ENCODE measurements at regions of chrX and their contacts with region 1.

Region 1: GRCh38 chrX:38664285-38664684 is 102.9 kb downstream of the TSPAN7 start:
- DNase-seq: peak; percentile 52
- H3K4me3 ChIP-seq: no peak overlapping the region
- H3K27ac ChIP-seq: no peak overlapping the region
- H3K4me1 ChIP-seq: no peaks in the 10 kb centered on the region
- H3K27me3 ChIP-seq: no peaks in the 10 kb centered on the region
- CTCF ChIP-seq: peak; percentile 58

Region 2: DNA sequence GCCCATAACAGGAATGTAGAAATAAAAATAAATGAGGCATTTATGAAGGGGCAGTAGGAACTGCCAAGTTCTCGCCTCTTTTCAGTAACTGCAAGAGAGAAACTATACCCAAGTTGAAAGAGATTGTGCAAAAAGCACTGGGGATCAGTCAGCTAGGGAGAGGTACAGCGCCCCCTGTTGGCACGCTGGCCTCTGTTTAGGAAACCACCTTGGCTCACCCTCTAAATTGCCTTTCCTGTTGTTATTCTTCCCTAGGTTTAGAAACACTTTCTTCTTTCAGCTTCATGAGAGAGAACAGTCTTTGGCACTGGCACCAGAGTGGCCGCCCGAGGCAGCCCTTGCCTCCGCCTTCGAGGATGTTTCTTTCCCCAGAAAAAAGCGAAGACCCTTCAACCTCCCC is 485.5 kb after region 1 on chrX:
- CTCF ChIA-PET with region 1: no interaction called
- POLR2A ChIA-PET with region 1: no interaction called
- intact Hi-C with region 1: loop called (anchors 5 kb)
- DNase-seq: peak; percentile 53
- H3K4me3 ChIP-seq: no peak overlapping the region
- H3K27ac ChIP-seq: no peak overlapping the region
- H3K4me1 ChIP-seq: no peaks in the 10 kb centered on the region
- H3K27me3 ChIP-seq: no peaks in the 10 kb centered on the region
- CTCF ChIP-seq: peak; percentile 83

Region 3: DNA sequence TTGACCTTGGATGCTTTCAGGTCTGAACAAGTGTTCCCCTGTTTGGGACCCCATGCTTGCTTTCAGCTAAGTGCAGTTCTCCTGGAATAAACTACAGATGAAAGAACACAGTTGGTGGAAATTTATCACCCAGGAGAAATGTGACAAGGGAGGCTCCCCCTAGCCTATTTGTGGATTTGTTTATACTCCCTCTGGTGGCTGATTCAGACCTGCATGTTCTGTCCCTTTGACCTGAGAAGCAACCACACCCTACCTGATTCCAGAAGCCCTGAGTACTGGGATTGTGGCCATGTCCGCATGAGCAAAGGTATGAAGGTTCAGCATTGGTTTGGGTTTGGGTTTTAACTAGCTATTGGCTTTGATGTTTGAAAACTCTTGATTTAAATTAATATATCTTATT is 577.9 kb after region 1 on chrX:
- CTCF ChIA-PET with region 1: no interaction called
- POLR2A ChIA-PET with region 1: no interaction called
- intact Hi-C with region 1: loop called (anchors 5 kb)
- DNase-seq: peak; percentile 33
- H3K4me3 ChIP-seq: no peak overlapping the region
- H3K27ac ChIP-seq: no peak overlapping the region
- H3K4me1 ChIP-seq: no peaks in the 10 kb centered on the region
- H3K27me3 ChIP-seq: no peaks in the 10 kb centered on the region
- CTCF ChIP-seq: peak; percentile 55